CD4-positive, alpha-beta T cell (primary cell): ENCODE measurements at regions of chr5 and their contacts with region 1.

Region 1: DNA sequence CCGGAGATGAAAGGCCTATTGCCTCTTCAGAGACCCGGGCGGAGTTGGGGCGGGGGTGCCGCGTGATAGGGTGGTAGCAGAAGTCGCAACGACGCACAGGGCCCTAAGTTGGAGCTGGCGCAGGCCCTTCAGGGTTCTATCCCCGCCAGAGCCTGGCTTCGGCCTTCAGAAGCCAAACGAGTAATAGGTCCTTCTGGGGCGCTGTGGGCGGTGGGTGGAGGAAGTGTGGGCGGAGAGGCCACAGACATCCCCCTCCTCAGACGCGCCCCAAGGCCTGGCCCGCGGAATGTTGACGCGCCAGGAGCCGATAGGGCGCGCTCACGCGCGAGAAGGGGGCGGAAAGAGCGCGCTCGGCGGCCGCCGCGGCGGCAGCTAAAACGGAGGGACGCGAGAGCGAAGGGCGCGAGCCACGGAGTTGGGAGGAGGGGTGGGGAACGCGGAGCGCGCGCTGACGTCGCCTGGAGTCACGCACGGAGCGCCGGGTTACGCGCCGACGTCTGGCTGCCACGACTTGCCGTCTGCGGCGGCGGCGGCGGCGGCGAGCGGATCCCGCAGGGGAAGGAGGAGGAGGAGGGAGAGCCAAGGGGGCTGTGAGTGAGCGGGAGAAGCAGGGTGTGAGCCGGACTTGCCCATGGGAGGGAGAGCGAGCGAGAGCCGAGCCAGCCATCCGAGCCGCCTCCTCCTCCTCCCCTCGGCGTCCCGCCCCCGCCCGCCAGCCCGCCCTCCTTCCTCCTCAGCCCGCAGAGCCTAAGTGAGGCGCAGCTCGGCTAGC is 6.4 kb upstream of the PURA start:
- DNase-seq: peak; percentile 89 to 98 (median 93)
- ATAC-seq: peak; percentile 80
- H3K4me3 ChIP-seq: peak overlapping the region; percentile 76
- H3K4me3 Mint-ChIP-seq: peak overlapping the region; percentile 96
- H3K27ac ChIP-seq: peak overlapping the region; percentile 92 to 96
- H3K27ac Mint-ChIP-seq: peak overlapping the region; percentile 100
- H3K4me1 ChIP-seq: peaks cover 34% of the 10 kb centered on the region
- H3K4me1 Mint-ChIP-seq: peaks cover 59% of the 10 kb centered on the region
- H3K27me3 ChIP-seq: peaks cover 10 to 11% of the 10 kb centered on the region in 2 experiments
- H3K27me3 Mint-ChIP-seq: peaks cover 11% of the 10 kb centered on the region
- CTCF ChIP-seq: peak; percentile 23

Region 2: GRCh38 chr5:139844472-139845145 is 262.9 kb before region 1 on chr5:
- CTCF ChIA-PET with region 1: no interaction called
- POLR2A ChIA-PET with region 1: interaction called, 3 read pairs
- intact Hi-C with region 1: loop called in 1 of 2 experiments (anchors 5 kb)
- DNase-seq: peak; percentile 45 to 81 (median 66)
- ATAC-seq: no peak
- H3K4me3 ChIP-seq: no peak overlapping the region
- H3K4me3 Mint-ChIP-seq: peak overlapping the region; percentile 74
- H3K27ac ChIP-seq: no peak overlapping the region
- H3K27ac Mint-ChIP-seq: no peak overlapping the region
- H3K4me1 ChIP-seq: peaks cover 15% of the 10 kb centered on the region
- H3K4me1 Mint-ChIP-seq: peaks cover 17% of the 10 kb centered on the region
- H3K27me3 ChIP-seq: peaks cover 12 to 21% of the 10 kb centered on the region in 2 experiments
- H3K27me3 Mint-ChIP-seq: peaks cover 38% of the 10 kb centered on the region
- CTCF ChIP-seq: peak; percentile 70

Region 3: GRCh38 chr5:140073296-140073695 is 34.2 kb before region 1 on chr5:
- CTCF ChIA-PET with region 1: interaction called, 5 read pairs
- POLR2A ChIA-PET with region 1: interaction called, 3 read pairs
- intact Hi-C with region 1: loop called (anchors 2 to 5 kb)
- DNase-seq: peak in 3 of 14 experiments; percentile 49 to 67 (median 64)
- ATAC-seq: no peak
- H3K4me3 ChIP-seq: no peak overlapping the region
- H3K4me3 Mint-ChIP-seq: no peak overlapping the region
- H3K27ac ChIP-seq: no peak overlapping the region
- H3K27ac Mint-ChIP-seq: no peak overlapping the region
- H3K4me1 ChIP-seq: no peaks in the 10 kb centered on the region
- H3K4me1 Mint-ChIP-seq: no peaks in the 10 kb centered on the region
- H3K27me3 ChIP-seq: peaks cover 7 to 10% of the 10 kb centered on the region in 2 experiments
- H3K27me3 Mint-ChIP-seq: peaks cover 36% of the 10 kb centered on the region
- CTCF ChIP-seq: peak; percentile 83

Region 4: DNA sequence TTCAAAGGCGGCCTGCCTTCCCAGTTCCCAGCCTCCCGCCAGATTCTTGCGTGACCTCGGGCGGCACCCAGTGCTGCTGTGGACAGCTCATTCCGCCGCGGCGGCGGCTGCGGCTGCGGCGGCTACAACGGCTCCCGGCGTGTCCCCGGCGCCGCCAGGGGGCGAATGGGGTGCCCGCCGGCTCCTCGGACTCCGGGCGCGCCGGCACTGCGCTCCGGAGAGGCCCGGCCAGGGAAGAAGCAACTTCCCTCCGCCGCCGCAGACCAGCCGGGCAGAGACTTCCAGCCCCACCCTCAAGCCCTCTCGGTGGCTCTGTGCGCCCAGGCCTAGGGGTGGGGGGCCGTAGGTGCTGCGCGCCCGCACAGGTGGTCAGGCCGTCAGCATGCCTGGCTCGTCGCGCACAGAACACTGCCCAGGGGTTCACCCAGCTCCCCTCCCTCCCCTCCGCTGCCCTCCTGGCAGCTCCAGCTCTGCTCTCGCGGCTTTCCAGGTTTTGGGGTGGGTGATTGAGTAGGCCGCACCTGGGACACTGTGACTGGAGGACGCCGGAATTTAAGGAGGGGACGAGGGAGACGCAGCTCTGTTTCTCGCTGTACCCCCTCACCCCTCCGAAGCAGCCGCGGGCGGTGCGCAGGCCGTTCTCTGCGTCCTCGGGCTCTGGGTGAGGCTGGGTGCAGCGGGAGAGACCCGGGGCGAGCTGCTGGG is 38.5 kb after region 1 on chr5:
- CTCF ChIA-PET with region 1: interaction called, 52 read pairs
- POLR2A ChIA-PET with region 1: interaction called, 18 read pairs
- intact Hi-C with region 1: loop called in 1 of 2 experiments (anchors 5 kb)
- DNase-seq: peak in 13 of 14 experiments; percentile 11 to 81 (median 48)
- ATAC-seq: peak; percentile 71
- H3K4me3 ChIP-seq: peak overlapping the region; percentile 36
- H3K4me3 Mint-ChIP-seq: peak overlapping the region; percentile 21
- H3K27ac ChIP-seq: no peak overlapping the region
- H3K27ac Mint-ChIP-seq: no peak overlapping the region
- H3K4me1 ChIP-seq: peaks cover 29% of the 10 kb centered on the region
- H3K4me1 Mint-ChIP-seq: peaks cover 21% of the 10 kb centered on the region
- H3K27me3 ChIP-seq: peaks cover 12 to 18% of the 10 kb centered on the region in 2 experiments
- H3K27me3 Mint-ChIP-seq: peaks cover 27% of the 10 kb centered on the region
- CTCF ChIP-seq: peak; percentile 63

Region 5: GRCh38 chr5:140244525-140245025 is 137.1 kb after region 1 on chr5:
- CTCF ChIA-PET with region 1: no interaction called
- POLR2A ChIA-PET with region 1: no interaction called
- intact Hi-C with region 1: no loop called
- DNase-seq: peak; percentile 69 to 88 (median 75)
- ATAC-seq: peak; percentile 78
- H3K4me3 ChIP-seq: no peak overlapping the region
- H3K4me3 Mint-ChIP-seq: peak overlapping the region; percentile 48
- H3K27ac ChIP-seq: no peak overlapping the region
- H3K27ac Mint-ChIP-seq: peak overlapping the region; percentile 43
- H3K4me1 ChIP-seq: peaks cover 18% of the 10 kb centered on the region
- H3K4me1 Mint-ChIP-seq: peaks cover 31% of the 10 kb centered on the region
- H3K27me3 ChIP-seq: no peaks in the 10 kb centered on the region
- H3K27me3 Mint-ChIP-seq: no peaks in the 10 kb centered on the region
- CTCF ChIP-seq: peak; percentile 76

Region 6: DNA sequence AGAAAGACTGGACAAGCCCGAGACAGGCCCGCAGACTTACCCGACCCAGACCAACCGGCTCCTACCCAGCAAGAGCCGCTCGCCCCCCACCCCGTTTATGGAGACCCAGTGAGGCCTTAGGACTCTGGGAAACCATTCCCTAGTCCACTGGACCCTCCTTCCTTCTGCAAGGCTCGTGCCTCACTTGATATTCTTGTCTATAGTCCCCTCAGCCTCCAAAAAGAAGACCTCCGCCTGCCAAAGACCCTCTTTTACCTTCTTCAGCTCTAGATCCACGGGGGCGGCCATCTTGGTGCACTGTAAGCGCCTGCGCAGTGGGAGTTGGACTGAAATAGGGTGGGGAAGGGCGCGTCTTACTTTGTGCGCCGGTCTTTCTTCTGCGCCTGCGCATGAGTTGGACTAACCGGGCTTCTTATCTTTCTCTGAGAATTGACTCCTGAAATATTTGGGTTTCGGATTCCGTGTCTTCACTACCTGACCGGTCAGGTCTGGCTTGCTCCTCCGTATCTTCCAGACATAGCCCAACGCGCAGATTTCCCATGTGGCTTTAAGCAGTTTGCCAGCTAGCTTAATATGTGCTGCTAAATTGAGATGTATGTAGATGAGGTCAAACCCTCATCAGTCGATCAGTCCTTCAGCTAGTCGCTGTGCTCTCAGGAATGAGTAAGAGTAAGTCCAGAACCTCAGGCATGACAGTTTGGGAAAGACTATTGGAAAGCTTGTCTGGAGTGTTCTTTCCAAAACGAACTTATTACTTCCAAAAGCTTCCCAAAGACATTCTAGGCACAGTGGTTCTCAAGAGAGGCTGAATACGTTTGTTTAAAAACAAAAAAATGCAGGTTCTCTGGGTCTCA is 195.5 kb after region 1 on chr5 and contains the start of gene PFDN1:
- CTCF ChIA-PET with region 1: no interaction called
- POLR2A ChIA-PET with region 1: no interaction called
- intact Hi-C with region 1: loop called in 1 of 2 experiments (anchors 10 kb)
- DNase-seq: peak; percentile 79 to 97 (median 88)
- ATAC-seq: peak; percentile 99
- H3K4me3 ChIP-seq: peak within 1 kb of the TSS; percentile 73
- H3K4me3 Mint-ChIP-seq: peak within 1 kb of the TSS; percentile 97
- H3K27ac ChIP-seq: peak within 1 kb of the TSS; percentile 38 to 42
- H3K27ac Mint-ChIP-seq: peak within 1 kb of the TSS; percentile 92
- H3K4me1 ChIP-seq: peaks cover 14% of the 10 kb centered on the region
- H3K4me1 Mint-ChIP-seq: peaks cover 30% of the 10 kb centered on the region
- H3K27me3 ChIP-seq: no peaks in the 10 kb centered on the region
- H3K27me3 Mint-ChIP-seq: no peaks in the 10 kb centered on the region
- CTCF ChIP-seq: no peak
- total RNA-seq, gene PFDN1: 21.3 to 22.0 TPM

Region 7: DNA sequence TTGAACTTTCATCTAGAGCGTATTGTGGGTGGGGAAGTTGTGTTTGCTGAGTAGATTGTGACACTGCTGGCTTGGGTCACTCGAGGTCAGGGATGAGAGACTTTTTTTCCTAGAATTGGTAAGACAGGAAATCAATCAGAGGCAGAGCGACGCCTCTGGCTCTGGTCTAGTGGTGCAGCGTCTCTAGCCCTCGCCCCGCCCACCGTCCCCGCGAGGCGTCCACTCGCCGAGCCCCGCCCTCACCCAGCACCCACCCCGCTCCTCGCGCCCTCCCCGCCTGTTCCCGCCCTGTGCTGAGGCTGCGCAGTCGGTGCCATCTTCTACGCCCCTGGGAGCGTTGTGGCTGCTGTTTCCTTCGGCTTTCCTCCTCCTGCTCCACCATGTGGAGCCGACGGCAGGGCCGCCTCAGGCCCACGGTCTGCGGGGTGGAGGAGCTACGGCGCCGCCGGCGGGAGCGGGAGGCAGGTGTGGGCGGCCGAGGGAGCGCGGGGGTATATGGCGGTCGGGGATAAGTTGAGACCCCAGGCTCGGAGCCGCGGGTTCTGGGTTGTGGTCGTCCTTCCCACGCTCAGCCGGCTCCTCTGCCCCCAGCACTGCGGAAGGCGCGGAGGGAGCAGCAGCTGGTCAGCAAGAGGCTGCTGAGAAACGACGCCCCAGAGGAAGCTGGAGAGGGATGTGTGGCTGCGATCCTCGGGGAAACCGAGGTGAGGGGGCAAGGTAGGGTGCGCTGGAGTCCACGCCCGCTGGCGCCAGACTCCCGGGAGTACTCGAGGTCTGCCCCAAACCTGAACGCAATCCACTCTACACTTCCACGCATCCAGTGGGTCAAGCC is 531.9 kb after region 1 on chr5 and contains the start of gene TMCO6:
- CTCF ChIA-PET with region 1: no interaction called
- POLR2A ChIA-PET with region 1: no interaction called
- intact Hi-C with region 1: loop called in 1 of 2 experiments (anchors 10 kb)
- DNase-seq: peak; percentile 94 to 99 (median 96)
- ATAC-seq: peak; percentile 98
- H3K4me3 ChIP-seq: peak within 1 kb of the TSS; percentile 73
- H3K4me3 Mint-ChIP-seq: peak within 1 kb of the TSS; percentile 92
- H3K27ac ChIP-seq: peak within 1 kb of the TSS; percentile 77 to 94
- H3K27ac Mint-ChIP-seq: peak within 1 kb of the TSS; percentile 93
- H3K4me1 ChIP-seq: peaks cover 28% of the 10 kb centered on the region
- H3K4me1 Mint-ChIP-seq: peaks cover 34% of the 10 kb centered on the region
- H3K27me3 ChIP-seq: no peaks in the 10 kb centered on the region
- H3K27me3 Mint-ChIP-seq: no peaks in the 10 kb centered on the region
- CTCF ChIP-seq: peak; percentile 76
- total RNA-seq, gene TMCO6: 20.9 to 21.1 TPM